PC-3 (cell line): ENCODE measurements at regions of chr4 and their contacts with region 1.

Region 1: DNA sequence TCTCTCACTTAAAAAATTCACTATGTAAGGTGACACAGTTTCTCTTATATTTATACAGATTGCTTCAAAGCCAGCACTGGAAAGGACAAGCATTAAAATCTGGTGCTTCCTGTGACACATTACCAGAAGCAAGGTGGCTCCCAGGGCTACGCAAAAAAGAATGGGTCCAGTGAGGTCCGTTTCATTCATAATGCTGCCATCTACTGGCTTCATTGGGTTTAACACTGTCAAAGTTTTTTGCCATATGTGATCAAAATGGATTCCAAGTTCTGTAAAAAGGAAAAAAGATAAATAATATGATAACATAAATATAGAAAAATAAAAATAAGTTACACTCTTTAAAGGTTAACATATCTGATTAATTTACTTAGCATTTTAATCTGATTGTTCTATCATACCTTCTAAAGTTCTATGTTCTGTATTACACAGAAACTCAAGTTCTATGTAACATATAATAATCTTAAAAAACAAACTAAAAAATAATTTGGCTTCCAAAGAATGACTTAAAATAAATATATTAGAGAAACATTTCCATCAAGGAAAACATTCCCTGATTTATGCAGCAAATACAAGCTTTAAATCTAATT is 22.1 kb downstream of the YIPF7 start:
- DNase-seq: peak; percentile 81
- ATAC-seq: peak; percentile 77
- H3K4me3 ChIP-seq: no peak overlapping the region
- H3K27ac ChIP-seq: no peak overlapping the region
- H3K4me1 ChIP-seq: no peaks in the 10 kb centered on the region
- H3K27me3 ChIP-seq: no peaks in the 10 kb centered on the region
- CTCF ChIP-seq: peak; percentile 62

Region 2: GRCh38 chr4:42995343-42995944 is 1633.9 kb before region 1 on chr4:
- CTCF ChIA-PET with region 1: no interaction called
- POLR2A ChIA-PET with region 1: no interaction called
- intact Hi-C with region 1: loop called (anchors 1 kb)
- DNase-seq: peak; percentile 49
- ATAC-seq: peak; percentile 63
- H3K4me3 ChIP-seq: no peak overlapping the region
- H3K27ac ChIP-seq: no peak overlapping the region
- H3K4me1 ChIP-seq: no peaks in the 10 kb centered on the region
- H3K27me3 ChIP-seq: no peaks in the 10 kb centered on the region
- CTCF ChIP-seq: peak; percentile 72

Region 3: GRCh38 chr4:43853565-43854264 is 775.7 kb before region 1 on chr4:
- CTCF ChIA-PET with region 1: no interaction called
- POLR2A ChIA-PET with region 1: no interaction called
- intact Hi-C with region 1: no loop called
- DNase-seq: no peak
- ATAC-seq: no peak
- H3K4me3 ChIP-seq: no peak overlapping the region
- H3K27ac ChIP-seq: no peak overlapping the region
- H3K4me1 ChIP-seq: no peaks in the 10 kb centered on the region; the same call in 1 of the 2 replicates
- H3K27me3 ChIP-seq: no peaks in the 10 kb centered on the region
- CTCF ChIP-seq: no peak

Region 4: DNA sequence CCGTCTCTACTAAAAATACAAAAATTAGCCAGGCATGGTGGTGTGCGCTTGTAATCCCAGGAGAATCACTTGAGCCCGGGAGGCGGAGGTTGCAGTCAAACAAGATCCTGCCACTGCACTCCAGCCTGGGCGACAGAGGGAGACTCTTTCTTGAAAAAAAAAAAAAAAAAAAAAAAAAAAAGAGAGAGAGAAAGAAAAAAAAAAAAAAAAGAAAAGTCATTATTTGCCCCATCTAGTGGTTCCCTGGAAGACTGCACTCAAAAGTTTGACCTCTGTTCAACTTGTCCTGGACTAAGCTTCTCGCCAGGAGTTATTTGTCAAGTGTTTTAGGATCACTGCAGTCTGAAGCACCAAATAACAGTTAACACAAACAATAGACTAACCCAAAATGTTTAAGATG is 135.4 kb before region 1 on chr4:
- CTCF ChIA-PET with region 1: no interaction called
- POLR2A ChIA-PET with region 1: no interaction called
- intact Hi-C with region 1: loop called (anchors 1 kb)
- DNase-seq: peak; percentile 49
- ATAC-seq: no peak
- H3K4me3 ChIP-seq: no peak overlapping the region
- H3K27ac ChIP-seq: no peak overlapping the region
- H3K4me1 ChIP-seq: no peaks in the 10 kb centered on the region
- H3K27me3 ChIP-seq: no peaks in the 10 kb centered on the region
- CTCF ChIP-seq: peak; percentile 49; the same call in 1 of the 2 replicates